MCF 10A (cell line): ENCODE measurements at regions of chr1 and their contacts with region 1.

Region 1: GRCh38 chr1:15617175-15617880 is at the start of gene DDI2:
- DNase-seq: peak; percentile 99
- H3K4me3 Mint-ChIP-seq: peak within 1 kb of the TSS; percentile 75
- H3K27ac Mint-ChIP-seq: peak within 1 kb of the TSS; percentile 86
- H3K4me1 Mint-ChIP-seq: peaks cover 28% of the 10 kb centered on the region
- H3K27me3 Mint-ChIP-seq: no peaks in the 10 kb centered on the region
- CTCF ChIP-seq: no peak
- total RNA-seq, gene DDI2: 26.6 and 32.7 TPM in 2 replicates

Region 2: DNA sequence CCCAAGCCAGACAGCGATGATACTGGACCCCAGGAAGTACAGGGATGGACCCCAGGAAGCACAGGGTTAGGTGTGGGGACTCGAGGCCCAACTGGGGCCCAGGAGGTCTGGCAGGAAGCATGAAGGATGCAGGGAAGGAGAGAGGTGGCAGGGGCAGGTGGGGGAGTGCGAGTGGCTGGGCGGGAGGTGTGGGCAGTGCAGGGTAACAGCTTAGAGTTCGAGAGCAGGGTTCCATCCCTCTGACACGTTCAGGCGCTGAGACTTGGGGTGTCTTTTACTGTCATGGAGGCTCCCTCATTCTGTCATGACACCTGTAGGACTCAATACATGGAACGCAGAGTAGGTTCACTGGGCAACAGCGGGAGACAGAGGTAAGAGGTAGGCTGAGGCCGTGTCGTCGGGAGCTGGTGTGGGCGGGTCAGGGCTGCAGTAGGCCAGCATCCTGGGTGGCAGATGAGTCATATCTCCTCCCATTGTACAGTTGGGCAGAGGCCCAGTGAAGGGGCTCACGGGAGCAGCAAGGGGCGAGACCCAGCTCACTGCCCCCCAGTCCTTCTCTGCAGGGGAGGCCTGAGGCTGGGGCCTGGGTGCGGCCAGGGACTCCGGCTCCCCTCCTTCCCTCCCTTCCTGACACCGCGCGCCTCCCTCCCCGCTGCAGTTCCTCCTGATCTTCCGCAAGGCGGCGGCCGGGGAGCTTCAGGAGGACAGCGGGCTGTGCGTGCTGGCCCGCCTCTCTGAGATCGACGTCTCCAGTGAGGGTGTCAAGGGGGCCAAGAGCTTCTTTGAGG is 190.6 kb before region 1 on chr1:
- CTCF ChIA-PET with region 1: no interaction called
- POLR2A ChIA-PET with region 1: no interaction called
- intact Hi-C with region 1: no loop called
- DNase-seq: peak; percentile 52
- H3K4me3 Mint-ChIP-seq: no peak overlapping the region
- H3K27ac Mint-ChIP-seq: peak overlapping the region; percentile 76
- H3K4me1 Mint-ChIP-seq: peaks cover 19% of the 10 kb centered on the region
- H3K27me3 Mint-ChIP-seq: no peaks in the 10 kb centered on the region
- CTCF ChIP-seq: no peak

Region 3: GRCh38 chr1:15454256-15454655 is 163.1 kb before region 1 on chr1:
- CTCF ChIA-PET with region 1: no interaction called
- POLR2A ChIA-PET with region 1: no interaction called
- intact Hi-C with region 1: no loop called
- DNase-seq: peak; percentile 66
- H3K4me3 Mint-ChIP-seq: no peak overlapping the region
- H3K27ac Mint-ChIP-seq: no peak overlapping the region
- H3K4me1 Mint-ChIP-seq: peaks cover 5% of the 10 kb centered on the region
- H3K27me3 Mint-ChIP-seq: no peaks in the 10 kb centered on the region
- CTCF ChIP-seq: no peak

Region 4: GRCh38 chr1:15526490-15527339 is 90.6 kb before region 1 on chr1 and contains the start of gene DNAJC16:
- CTCF ChIA-PET with region 1: no interaction called
- POLR2A ChIA-PET with region 1: interaction called, 36 read pairs
- intact Hi-C with region 1: loop called (anchors 1 kb)
- DNase-seq: peak; percentile 100
- H3K4me3 Mint-ChIP-seq: peak within 1 kb of the TSS; percentile 92
- H3K27ac Mint-ChIP-seq: peak within 1 kb of the TSS; percentile 100
- H3K4me1 Mint-ChIP-seq: peaks cover 16% of the 10 kb centered on the region
- H3K27me3 Mint-ChIP-seq: no peaks in the 10 kb centered on the region
- CTCF ChIP-seq: no peak
- total RNA-seq, gene DNAJC16: 17.2 and 26.5 TPM in 2 replicates

Region 5: DNA sequence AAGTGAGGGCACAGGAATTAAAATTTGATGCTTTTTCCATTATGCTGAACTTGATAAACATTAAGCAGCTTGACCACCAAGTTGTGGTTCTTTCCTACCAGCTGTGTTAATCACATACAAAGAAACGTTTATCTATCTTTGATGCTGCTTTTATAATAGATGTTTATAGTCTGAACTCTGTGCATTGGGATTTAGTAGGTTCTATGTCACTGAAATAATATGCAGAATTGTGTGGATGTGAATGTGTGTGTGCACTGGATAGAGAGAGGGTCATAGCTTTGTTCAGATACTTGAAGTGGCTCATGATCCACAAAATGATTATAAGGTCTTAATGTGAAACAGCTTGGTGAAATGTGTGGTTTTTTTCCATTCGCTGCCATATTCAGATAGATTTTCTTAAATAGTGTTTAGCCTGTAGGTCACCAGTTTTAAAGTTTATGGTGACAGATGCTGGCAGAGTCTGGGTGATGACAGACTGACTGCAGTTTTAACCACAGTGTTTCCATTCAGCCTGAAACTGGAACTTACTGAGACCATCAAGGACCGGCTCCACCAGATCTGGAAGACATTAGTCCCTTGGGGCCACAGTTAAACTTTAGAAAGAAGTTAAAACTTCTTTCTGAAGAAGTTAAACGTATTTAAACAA is 10.1 kb after region 1 on chr1:
- CTCF ChIA-PET with region 1: no interaction called
- POLR2A ChIA-PET with region 1: interaction called, 10 read pairs
- intact Hi-C with region 1: no loop called
- DNase-seq: no peak
- H3K4me3 Mint-ChIP-seq: no peak overlapping the region
- H3K27ac Mint-ChIP-seq: no peak overlapping the region
- H3K4me1 Mint-ChIP-seq: peaks cover 22% of the 10 kb centered on the region
- H3K27me3 Mint-ChIP-seq: no peaks in the 10 kb centered on the region
- CTCF ChIP-seq: no peak

Region 6: DNA sequence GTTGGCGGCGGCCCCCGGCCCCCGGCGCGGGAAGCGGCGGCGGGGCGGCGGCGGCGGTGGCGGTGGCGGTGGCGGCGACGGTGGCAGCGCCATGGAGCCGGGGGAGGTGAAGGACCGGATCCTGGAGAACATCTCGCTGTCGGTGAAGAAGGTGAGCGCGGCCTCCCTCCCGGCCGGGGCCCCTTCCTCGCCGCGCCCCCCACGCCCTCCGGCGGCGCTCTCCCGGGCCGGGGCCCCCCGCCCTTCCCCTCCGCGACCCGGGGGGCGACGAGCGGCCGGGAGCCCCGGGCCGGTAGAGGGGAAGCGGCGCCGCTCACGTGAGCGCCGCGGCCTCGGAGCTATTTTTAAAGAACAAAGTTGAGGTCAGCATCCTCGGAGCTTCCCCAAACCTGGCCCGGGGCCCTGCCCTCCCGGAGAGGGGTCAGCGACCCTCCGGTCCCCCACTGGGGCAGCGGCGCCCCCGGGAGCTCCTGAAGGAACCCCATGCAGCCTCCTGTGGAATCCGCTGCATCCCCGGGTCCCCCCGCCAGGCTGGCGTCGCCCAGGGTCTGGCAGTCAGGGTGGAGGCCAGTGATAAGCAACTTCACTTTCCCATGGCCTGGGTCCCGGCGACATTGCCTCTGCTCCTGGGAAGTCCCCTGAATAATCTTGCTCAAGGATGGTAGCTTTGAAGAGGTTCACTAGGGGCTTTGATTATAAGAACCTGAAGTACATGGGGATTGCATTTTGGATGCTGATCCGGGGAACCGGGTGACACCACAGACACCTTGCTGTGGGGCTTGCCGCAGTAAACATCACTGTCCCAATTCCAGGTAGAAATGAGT is 67.4 kb after region 1 on chr1:
- CTCF ChIA-PET with region 1: interaction called, 3 read pairs
- POLR2A ChIA-PET with region 1: interaction called, 78 read pairs
- intact Hi-C with region 1: loop called (anchors 2 kb)
- DNase-seq: no peak
- H3K4me3 Mint-ChIP-seq: peak overlapping the region; percentile 79
- H3K27ac Mint-ChIP-seq: peak overlapping the region; percentile 99
- H3K4me1 Mint-ChIP-seq: peaks cover 39% of the 10 kb centered on the region
- H3K27me3 Mint-ChIP-seq: no peaks in the 10 kb centered on the region
- CTCF ChIP-seq: no peak

Region 7: DNA sequence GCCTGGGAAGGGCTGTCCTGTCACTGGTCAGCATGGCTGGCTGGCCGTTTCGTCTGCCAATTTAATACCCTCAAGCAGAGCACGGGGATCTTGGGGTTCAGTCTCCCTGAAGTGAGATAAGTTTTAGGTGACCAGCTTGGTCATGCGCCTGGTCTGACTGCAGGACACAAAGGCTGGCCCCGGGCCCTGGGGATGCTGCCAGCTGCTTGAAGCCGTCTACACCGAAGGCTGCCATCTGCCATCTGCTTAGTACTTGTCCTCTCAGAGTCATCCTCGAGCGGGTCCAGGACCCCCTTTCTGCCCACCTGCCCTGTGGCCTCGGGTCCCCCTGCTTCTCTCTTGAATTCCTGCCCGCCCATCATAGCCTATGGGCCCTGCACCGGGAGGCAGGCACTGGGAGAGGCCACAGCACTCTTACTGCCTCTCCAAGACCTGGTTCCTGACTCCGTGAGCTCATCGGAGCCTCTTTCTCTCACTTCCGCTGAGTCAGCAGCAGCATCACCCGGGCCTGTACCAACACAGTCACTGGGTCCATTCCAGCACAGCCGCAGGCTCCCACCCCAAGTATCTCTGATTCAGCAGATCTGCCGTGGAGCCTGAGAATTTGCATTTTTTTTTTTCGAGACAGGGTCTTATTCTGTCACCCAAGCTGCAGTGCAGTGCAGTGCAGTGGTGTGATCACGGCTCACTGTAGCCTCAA is 148.3 kb after region 1 on chr1:
- CTCF ChIA-PET with region 1: no interaction called
- POLR2A ChIA-PET with region 1: interaction called, 11 read pairs
- intact Hi-C with region 1: no loop called
- DNase-seq: peak; percentile 97
- H3K4me3 Mint-ChIP-seq: peak overlapping the region; percentile 52
- H3K27ac Mint-ChIP-seq: peak overlapping the region; percentile 52
- H3K4me1 Mint-ChIP-seq: peaks cover 26% of the 10 kb centered on the region
- H3K27me3 Mint-ChIP-seq: no peaks in the 10 kb centered on the region
- CTCF ChIP-seq: no peak